Activated naive CD4-positive, alpha-beta T cell treated with anti-CD3 and anti-CD28 coated beads for 36 hours (primary cell): ENCODE measurements at regions of chr13 and their contacts with region 1.

Region 1: GRCh38 chr13:39616087-39616694 is 13.2 kb upstream of the LHFPL6 start:
- DNase-seq: peak; percentile 51
- H3K4me3 Mint-ChIP-seq: no peak overlapping the region
- H3K27ac Mint-ChIP-seq: no peak overlapping the region
- H3K4me1 Mint-ChIP-seq: no peaks in the 10 kb centered on the region
- H3K27me3 Mint-ChIP-seq: peaks cover 5% of the 10 kb centered on the region

Region 2: GRCh38 chr13:39051157-39051556 is 565.0 kb before region 1 on chr13:
- CTCF ChIA-PET with region 1: interaction called, 15 read pairs
- intact Hi-C with region 1: loop called (anchors 1 kb)
- DNase-seq: no peak
- H3K4me3 Mint-ChIP-seq: no peak overlapping the region
- H3K27ac Mint-ChIP-seq: no peak overlapping the region
- H3K4me1 Mint-ChIP-seq: peaks cover 14% of the 10 kb centered on the region
- H3K27me3 Mint-ChIP-seq: no peaks in the 10 kb centered on the region

Region 3: GRCh38 chr13:39273953-39274738 is 342.0 kb before region 1 on chr13:
- CTCF ChIA-PET with region 1: interaction called, 3 read pairs
- intact Hi-C with region 1: loop called (anchors 1 kb)
- DNase-seq: peak; percentile 17
- H3K4me3 Mint-ChIP-seq: no peak overlapping the region
- H3K27ac Mint-ChIP-seq: no peak overlapping the region
- H3K4me1 Mint-ChIP-seq: no peaks in the 10 kb centered on the region
- H3K27me3 Mint-ChIP-seq: peaks cover 23% of the 10 kb centered on the region

Region 4: DNA sequence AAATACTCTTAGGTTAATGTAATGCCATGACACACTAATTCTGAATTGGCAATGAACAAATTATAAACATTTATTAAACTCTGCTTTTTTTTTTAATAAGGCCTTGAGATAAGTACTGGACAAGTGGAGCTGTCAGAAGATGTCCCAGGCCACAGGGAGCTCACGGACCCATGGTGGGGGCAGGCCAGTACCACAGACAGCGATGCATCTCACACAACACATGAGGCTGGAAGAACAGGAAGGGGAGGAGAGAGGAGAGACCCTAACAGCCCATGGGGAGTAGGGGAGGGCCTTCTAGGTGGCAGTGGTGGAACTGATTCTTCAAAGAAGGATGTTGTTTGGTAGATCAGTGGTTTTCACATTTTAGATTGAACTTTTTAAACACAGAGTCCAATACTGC is 141.6 kb before region 1 on chr13:
- CTCF ChIA-PET with region 1: interaction called, 11 read pairs
- intact Hi-C with region 1: no loop called
- DNase-seq: no peak
- H3K4me3 Mint-ChIP-seq: no peak overlapping the region
- H3K27ac Mint-ChIP-seq: no peak overlapping the region
- H3K4me1 Mint-ChIP-seq: no peaks in the 10 kb centered on the region
- H3K27me3 Mint-ChIP-seq: peaks cover 8% of the 10 kb centered on the region

Region 5: GRCh38 chr13:39602614-39603366 is 13.4 kb before region 1 on chr13 and contains the start of gene LHFPL6:
- CTCF ChIA-PET with region 1: interaction called, 16 read pairs
- intact Hi-C with region 1: loop called (anchors 1 kb)
- DNase-seq: peak; percentile 85
- H3K4me3 Mint-ChIP-seq: peak within 1 kb of the TSS; percentile 73
- H3K27ac Mint-ChIP-seq: no peak within 1 kb of the TSS
- H3K4me1 Mint-ChIP-seq: peaks cover 11% of the 10 kb centered on the region
- H3K27me3 Mint-ChIP-seq: peaks cover 41% of the 10 kb centered on the region
- total RNA-seq, gene LHFPL6: 1.2 to 1.5 TPM

Region 6: DNA sequence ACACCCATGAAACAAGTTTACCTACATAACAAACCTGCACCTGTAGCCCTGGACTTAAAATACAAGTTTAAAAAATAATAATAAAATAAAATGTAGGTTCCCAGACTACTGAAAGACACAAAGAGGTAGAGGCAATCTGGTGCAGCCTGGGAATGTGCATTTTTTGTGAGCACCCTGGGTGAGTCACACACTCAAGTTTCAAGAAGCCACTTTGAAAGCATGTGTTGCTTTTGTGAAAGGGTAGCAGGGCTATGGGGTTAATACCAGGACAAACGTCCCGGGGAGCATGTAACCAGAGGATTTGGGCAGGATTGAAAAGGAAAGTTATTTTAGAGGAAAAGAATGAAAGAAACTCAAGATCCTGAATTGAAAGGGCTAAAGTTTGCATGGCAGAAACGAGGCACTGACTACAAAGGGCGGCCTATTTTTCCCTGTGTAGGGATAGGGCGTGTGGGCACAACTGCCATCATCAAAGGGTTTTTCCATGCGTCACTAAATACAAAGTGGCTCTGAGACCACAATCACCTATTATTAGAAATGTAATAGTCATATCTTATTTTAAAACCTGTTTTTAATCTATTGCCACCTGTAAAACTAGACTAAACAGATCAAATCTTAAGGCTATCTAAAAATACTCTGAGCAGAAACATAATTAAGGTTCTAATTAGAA is 354.1 kb after region 1 on chr13:
- CTCF ChIA-PET with region 1: no interaction called
- intact Hi-C with region 1: no loop called
- DNase-seq: no peak
- H3K4me3 Mint-ChIP-seq: no peak overlapping the region
- H3K27ac Mint-ChIP-seq: no peak overlapping the region
- H3K4me1 Mint-ChIP-seq: peaks cover 3% of the 10 kb centered on the region
- H3K27me3 Mint-ChIP-seq: no peaks in the 10 kb centered on the region

Region 7: DNA sequence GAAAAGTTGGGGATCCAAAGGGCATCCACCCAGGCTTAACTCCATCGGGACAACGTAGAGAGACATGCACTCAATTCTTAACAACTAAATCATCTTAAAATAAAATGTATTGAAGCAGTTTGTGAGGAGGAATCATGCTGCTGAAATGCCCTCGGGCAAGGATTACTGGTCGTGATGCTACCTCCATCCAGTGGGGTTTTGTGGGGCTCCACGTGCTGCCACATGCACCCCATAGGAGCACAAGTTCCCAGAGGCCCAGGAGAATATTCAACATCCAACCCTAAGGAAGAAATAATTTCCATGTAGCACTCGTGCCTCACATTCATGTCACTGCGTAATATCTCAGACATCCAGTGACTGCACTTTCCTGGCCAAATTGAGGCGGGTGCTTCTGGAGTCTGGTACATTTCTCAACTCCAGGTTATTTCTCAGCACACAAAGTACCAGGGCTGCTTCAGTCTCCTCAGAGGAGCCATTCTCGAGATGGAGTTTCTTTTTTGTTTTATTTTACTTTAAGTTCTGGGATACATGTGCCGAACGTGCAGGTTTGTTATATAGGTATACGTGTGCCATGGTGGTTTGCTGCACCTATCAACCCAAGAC is 620.5 kb after region 1 on chr13:
- CTCF ChIA-PET with region 1: no interaction called
- intact Hi-C with region 1: no loop called
- DNase-seq: no peak
- H3K4me3 Mint-ChIP-seq: no peak overlapping the region
- H3K27ac Mint-ChIP-seq: no peak overlapping the region
- H3K4me1 Mint-ChIP-seq: peaks cover 1% of the 10 kb centered on the region
- H3K27me3 Mint-ChIP-seq: no peaks in the 10 kb centered on the region